Dendritic cell treated with granulocyte-macrophage colony-stimulating factor and Interleukin-4, amounts not matched to agents 40 ng/mL and 50 ng/mL, for 4 days (primary cell): ENCODE measurements at regions of chr5 and their contacts with region 1.

Region 1: GRCh38 chr5:111550279-111551020 is 38.1 kb upstream of the STARD4 start:
- H3K4me3 Mint-ChIP-seq: no peak overlapping the region
- H3K27ac Mint-ChIP-seq: no peak overlapping the region
- H3K4me1 Mint-ChIP-seq: peaks cover 27% of the 10 kb centered on the region
- H3K27me3 Mint-ChIP-seq: no peaks in the 10 kb centered on the region

Region 2: DNA sequence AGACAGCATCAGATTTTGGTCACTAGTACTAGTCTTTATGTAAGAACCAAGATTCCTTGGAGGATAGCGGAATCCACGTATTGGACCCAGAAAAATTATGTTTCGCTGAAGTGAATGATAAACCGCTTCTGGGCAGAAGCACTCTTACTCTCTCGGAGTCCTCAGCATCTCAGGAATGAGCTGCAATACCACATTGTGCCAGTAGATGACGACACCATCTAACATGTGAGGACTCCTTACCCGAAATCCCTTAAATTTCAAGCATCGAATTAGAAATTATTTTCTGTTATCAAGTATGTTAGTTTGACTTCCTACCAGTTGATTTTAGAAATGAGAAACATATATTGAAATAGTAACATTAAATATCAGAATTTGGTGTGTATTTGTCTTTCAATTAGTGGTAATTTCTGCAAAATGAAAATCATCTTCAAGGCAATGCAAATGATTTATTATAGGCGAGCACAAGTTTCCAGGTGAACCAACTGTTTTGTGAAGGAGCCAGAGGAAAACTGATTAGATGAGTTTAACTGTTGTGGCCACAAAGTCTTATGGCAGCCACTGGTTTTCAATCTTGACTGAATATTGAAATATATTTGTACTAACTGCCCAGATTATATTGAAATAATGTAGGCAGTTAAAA is 392.2 kb before region 1 on chr5:
- intact Hi-C with region 1: loop called (anchors 10 kb)
- H3K4me3 Mint-ChIP-seq: no peak overlapping the region
- H3K27ac Mint-ChIP-seq: no peak overlapping the region
- H3K4me1 Mint-ChIP-seq: no peaks in the 10 kb centered on the region
- H3K27me3 Mint-ChIP-seq: peaks cover 2% of the 10 kb centered on the region

Region 3: GRCh38 chr5:111511831-111512374 is 38.5 kb before region 1 on chr5:
- intact Hi-C with region 1: no loop called
- H3K4me3 Mint-ChIP-seq: peak overlapping the region; percentile 97
- H3K27ac Mint-ChIP-seq: peak overlapping the region; percentile 96
- H3K4me1 Mint-ChIP-seq: peaks cover 36% of the 10 kb centered on the region
- H3K27me3 Mint-ChIP-seq: no peaks in the 10 kb centered on the region

Region 4: GRCh38 chr5:111757355-111758283 is 207.2 kb after region 1 on chr5:
- intact Hi-C with region 1: loop called (anchors 5 kb)
- H3K4me3 Mint-ChIP-seq: peak overlapping the region; percentile 84
- H3K27ac Mint-ChIP-seq: peak overlapping the region; percentile 84
- H3K4me1 Mint-ChIP-seq: peaks cover 44% of the 10 kb centered on the region
- H3K27me3 Mint-ChIP-seq: peaks cover 21% of the 10 kb centered on the region